Uterus (tissue), 4 donors: ENCODE measurements at regions of chr12 and their contacts with region 1.

Region 1: DNA sequence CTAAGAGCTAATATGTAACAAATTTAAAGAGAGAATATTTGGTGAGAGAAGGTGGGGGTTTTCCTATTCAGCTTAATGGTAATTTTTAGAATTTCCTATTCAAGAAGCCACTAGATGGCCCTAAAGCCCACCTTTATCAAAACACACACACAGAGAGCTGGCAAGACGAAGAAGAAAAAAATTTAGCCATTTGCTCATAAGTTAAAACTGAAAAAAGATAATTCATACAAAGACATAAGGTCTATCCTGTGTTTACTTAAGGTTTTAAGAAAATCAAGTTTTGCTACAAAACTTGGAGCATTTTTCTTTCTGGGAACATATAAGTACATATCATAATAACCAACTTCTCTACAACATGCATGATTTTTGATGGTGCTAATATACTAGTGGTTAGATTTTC is 46.8 kb upstream of the PCED1B start:
- DNase-seq: no peak
- H3K4me3 ChIP-seq: no peak overlapping the region
- H3K27ac ChIP-seq: no peak overlapping the region
- H3K4me1 ChIP-seq: no peaks in the 10 kb centered on the region
- H3K27me3 ChIP-seq: no peaks in the 10 kb centered on the region
- CTCF ChIP-seq: peak; percentile 59 to 72 (median 66)
- POLR2A ChIP-seq: no peak

Region 2: GRCh38 chr12:47686645-47687240 is 654.1 kb after region 1 on chr12:
- intact Hi-C with region 1: loop called (anchors 5 kb)
- DNase-seq: no peak
- H3K4me3 ChIP-seq: no peak overlapping the region
- H3K27ac ChIP-seq: no peak overlapping the region
- H3K4me1 ChIP-seq: no peaks in the 10 kb centered on the region
- H3K27me3 ChIP-seq: no peaks in the 10 kb centered on the region
- CTCF ChIP-seq: peak; percentile 52 to 61 (median 54)
- POLR2A ChIP-seq: no peak